GM10248 (cell line): ENCODE measurements at regions of chr18 and their contacts with region 1.

Region 1: DNA sequence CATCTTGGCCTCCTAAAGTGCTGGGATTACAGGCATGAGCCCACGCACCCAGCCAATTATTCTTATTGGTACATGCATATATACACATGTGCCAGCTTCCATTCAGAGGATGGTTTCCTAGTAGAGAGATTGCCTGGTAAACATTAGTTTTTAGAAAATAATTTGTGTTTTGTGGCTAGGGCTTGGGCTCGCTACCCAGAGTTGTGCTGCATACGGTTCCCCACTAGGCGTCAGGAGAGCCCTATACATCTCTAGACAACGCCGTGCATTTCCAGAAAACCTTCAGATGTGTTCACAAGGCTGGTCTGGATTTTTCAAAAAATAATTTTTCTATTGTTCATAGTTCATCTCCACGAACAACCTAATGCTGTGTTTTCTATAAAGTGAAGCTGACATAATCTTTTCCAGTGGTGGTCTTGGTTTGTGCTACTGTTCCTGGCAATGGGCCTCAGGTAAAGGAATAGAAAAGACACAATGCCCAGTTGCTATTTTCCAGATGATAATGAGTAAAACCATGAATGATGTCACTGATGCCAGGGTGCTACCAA is 14.7 kb upstream of the AFG3L2 start:
- DNase-seq: peak; percentile 66
- CTCF ChIP-seq: peak; percentile 91

Region 2: DNA sequence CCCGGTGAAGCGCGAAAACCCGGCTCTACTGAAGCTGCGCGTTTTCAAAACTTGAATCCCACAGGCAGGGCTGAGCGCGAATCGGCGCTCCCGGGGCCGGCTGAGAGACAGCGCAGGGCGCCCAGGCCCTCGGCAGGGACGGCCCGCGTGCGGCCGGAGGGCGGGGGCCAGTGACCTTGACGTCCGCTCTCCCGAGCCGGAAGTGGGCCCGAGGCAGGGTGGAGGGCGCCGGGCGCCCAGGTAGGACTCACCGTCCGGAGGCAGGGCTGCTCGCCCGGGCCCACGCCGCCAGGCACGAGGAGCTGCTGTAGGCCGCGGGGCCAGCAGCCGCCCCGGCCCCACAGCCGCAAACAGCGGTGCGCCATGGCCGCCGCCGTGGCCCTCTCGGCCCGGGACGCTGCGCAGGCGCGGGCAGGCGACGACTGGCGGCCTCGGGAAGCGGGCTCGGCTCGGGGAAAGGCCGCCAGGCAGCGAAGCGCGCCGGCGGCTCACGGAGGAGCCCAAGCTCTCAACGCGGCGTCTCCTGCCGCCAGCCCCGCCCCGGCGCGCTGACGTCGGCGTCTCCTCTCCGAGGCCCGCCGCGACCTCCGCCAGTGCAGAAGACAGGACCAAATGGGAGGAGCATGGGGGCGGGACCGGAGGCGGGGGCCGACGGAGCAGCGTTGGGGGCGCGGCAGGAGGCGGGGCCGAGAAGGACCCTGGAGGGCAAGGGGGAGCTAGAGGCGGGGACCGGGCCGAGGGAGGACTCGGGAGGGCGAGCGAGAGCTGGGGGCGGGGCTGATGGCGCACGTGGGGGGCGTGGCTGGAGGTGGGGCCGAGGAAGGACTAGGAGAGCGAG is 14.8 kb before region 1 on chr18 and contains the start of gene AFG3L2:
- CTCF ChIA-PET with region 1: interaction called, 29 read pairs
- POLR2A ChIA-PET with region 1: interaction called, 3 read pairs
- DNase-seq: peak; percentile 99
- CTCF ChIP-seq: no peak

Region 3: DNA sequence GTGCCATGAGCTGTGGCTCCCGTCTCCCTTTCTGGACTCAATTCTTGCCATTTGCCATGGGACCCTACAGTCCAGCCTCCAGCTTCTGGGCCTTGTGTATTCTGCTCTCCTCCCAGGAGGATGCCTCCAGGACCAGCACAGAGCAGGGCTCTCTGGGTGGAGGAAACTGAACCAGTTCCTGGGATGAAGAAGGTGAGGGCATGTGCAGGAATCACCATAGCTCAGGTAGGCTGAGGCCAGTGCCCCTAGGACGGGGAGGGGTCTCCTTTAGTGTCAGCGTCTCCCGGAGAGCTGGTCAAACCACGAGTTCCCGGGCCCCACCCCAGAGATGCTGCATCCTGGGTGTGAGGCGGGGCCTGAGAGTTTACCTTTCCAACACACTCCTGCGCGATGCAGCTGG is 10.2 kb after region 1 on chr18:
- CTCF ChIA-PET with region 1: interaction called, 31 read pairs
- POLR2A ChIA-PET with region 1: no interaction called
- DNase-seq: no peak
- CTCF ChIP-seq: no peak

Region 4: GRCh38 chr18:12408247-12408869 is 16.7 kb after region 1 on chr18:
- CTCF ChIA-PET with region 1: interaction called, 31 read pairs
- POLR2A ChIA-PET with region 1: no interaction called
- DNase-seq: no peak
- CTCF ChIP-seq: no peak

Region 5: DNA sequence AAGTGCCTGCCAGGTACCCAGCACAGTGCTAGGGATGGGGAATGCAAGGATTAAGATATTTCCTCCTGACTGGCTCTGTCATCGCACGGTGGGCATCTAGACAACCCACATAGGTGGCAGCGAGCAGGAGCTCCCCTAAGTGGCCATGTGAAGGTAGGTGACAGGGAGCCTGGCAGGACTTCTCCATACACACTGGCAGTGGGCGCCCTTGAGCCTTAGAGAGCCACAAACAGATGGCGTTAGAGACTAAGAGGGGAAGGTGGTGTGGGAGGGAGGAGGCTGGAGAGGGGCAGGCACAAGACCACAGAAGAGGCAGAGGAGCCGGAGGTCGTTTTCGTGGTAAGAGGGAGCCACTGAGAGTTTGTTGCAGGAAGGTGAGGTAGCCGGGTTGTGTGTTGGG is 31.2 kb after region 1 on chr18:
- CTCF ChIA-PET with region 1: interaction called, 12 read pairs
- POLR2A ChIA-PET with region 1: no interaction called
- DNase-seq: no peak
- CTCF ChIP-seq: peak; percentile 30

Region 6: DNA sequence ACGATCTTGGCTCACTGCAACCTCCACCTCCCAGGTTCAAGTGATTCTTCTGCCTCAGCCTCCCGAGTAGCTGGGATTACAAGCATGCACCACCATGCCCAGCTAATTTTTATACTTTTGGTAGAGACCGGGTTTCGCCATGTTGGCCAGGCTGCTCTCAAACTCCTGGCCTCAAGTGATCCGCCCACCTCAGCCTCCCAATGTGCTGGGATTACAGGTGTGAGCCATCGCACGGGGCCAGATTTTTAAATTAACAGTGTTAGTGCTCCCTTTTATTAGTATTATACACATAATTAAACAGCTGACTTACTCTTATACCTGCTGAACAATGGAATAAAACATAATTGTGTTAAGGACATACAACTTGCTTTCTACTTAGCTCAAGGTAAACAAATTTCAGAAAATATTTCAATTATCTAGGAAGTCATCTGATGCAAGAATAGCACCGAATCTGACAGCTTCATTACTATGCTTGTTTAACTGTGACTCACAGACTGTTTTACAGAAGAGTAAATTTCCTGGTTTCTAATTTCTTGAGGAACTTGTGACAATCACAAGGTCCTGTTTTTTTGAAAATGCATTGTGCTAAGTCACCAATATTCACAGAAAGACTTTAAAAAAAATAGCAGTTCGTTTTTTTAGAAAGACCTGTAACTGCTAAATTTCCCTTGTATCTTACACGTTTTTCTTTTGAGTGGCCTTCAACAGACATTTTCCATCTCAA is 215.1 kb after region 1 on chr18:
- CTCF ChIA-PET with region 1: no interaction called
- POLR2A ChIA-PET with region 1: no interaction called
- DNase-seq: no peak
- CTCF ChIP-seq: no peak

Region 7: DNA sequence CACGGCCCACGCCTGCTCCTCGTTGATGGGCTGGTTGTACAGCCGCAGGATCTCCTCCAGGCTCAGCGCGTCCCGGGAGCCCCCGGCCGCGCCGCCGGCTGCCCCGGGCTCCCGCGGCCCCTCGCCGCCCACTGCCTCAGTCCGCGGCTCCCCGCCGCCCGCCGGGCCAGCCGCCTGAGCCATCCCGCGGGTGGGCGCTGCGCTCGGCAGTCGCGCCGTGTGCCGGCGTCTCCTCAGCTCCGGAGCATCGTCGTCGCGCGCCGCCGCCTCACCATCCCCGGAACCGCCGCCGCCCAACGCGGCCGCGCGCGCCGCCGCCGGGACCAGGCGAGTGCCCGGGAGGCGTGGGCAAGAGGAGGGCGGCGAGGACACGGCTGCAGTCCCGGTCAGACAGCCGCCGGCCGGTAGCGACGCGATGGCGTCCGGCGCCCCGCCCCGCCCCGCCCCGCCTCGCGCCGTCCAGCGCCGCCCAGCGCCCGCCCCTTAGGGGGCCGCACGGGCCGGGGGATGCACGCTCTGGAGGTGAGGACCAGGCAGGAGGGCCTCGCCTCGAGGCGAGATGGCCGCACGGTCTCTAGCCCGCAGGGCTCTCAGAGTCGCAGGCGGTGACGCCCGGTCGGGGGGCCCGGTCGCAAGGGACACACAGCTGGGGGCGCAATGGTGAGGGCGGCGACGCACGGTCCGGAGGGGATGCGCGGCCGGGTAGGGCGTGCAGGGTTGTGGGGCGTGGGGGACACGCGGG is 266.2 kb after region 1 on chr18 and contains the start of gene SPIRE1:
- CTCF ChIA-PET with region 1: interaction called, 121 read pairs
- POLR2A ChIA-PET with region 1: no interaction called
- DNase-seq: peak; percentile 78
- CTCF ChIP-seq: no peak